Right cardiac atrium (tissue), 5 donors: ENCODE measurements at regions of chr4 and their contacts with region 1.

Region 1: GRCh38 chr4:55321707-55322264 is 24.3 kb upstream of the SRD5A3 start:
- DNase-seq: peak in 2 of 3 donors; percentile 80 to 84
- ATAC-seq: peak; percentile 29 to 67
- H3K4me3 ChIP-seq: no peak overlapping the region
- H3K27ac ChIP-seq: no peak overlapping the region
- H3K4me1 ChIP-seq: no peaks in the 10 kb centered on the region
- H3K27me3 ChIP-seq: no peaks in the 10 kb centered on the region

Region 2: DNA sequence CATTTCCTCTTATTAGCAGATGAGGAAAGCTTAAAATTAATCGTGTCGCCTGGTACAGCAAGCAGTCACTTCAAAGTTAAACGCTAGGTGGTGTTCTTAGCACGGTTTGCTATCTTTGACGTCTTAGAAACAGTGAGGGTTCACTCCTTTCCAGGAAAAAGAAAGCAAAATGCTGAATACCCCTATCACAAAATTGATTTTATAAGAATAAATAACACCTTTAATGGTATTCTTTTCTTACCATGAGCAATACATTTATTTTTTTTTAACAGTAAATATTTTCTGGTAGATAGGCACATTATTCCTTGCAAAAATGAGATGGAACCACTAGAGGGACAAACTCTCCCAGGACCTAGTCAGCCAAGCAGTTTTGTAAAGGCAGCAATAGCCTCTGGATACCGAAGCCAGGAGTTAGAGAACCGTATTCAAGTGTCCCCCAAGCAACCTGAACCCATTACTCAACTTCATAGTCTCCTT is 350.3 kb before region 1 on chr4:
- intact Hi-C with region 1: loop called in 3 of 4 experiments (anchors 2 to 5 kb)
- DNase-seq: no peak
- ATAC-seq: peak; percentile 71 to 83
- H3K4me3 ChIP-seq: no peak overlapping the region
- H3K27ac ChIP-seq: no peak overlapping the region
- H3K4me1 ChIP-seq: no peaks in the 10 kb centered on the region
- H3K27me3 ChIP-seq: no peaks in the 10 kb centered on the region

Region 3: DNA sequence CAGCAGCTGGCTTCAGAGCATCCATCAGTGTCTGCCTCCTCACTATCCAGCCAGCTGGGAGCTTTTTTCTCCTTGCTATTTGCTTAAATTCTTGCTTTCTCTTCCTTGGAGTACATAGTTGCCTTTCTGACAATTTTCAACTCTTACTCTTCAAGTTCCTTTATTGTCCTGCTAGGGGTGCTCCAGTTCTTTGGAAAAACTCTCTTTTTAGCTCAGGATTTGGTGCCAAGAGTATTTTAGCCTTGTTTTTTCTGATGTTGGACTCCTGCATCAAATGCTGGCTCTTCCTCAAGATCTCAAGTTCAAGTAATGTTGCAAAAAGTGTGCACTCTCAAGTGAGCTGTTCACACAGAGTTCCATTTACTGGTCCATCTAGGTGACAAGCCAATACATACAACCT is 322.8 kb before region 1 on chr4:
- intact Hi-C with region 1: loop called (anchors 2 to 10 kb)
- DNase-seq: no peak
- ATAC-seq: peak; percentile 71 to 77
- H3K4me3 ChIP-seq: no peak overlapping the region
- H3K27ac ChIP-seq: no peak overlapping the region
- H3K4me1 ChIP-seq: no peaks in the 10 kb centered on the region
- H3K27me3 ChIP-seq: no peaks in the 10 kb centered on the region

Region 4: GRCh38 chr4:55008166-55009070 is 313.4 kb before region 1 on chr4:
- intact Hi-C with region 1: loop called in 1 of 4 experiments (anchors 10 kb)
- DNase-seq: peak in 1 of 3 donors; percentile 12
- ATAC-seq: peak; percentile 41 to 71
- H3K4me3 ChIP-seq: no peak overlapping the region
- H3K27ac ChIP-seq: no peak overlapping the region
- H3K4me1 ChIP-seq: peaks cover 6% of the 10 kb centered on the region
- H3K27me3 ChIP-seq: no peaks in the 10 kb centered on the region

Region 5: DNA sequence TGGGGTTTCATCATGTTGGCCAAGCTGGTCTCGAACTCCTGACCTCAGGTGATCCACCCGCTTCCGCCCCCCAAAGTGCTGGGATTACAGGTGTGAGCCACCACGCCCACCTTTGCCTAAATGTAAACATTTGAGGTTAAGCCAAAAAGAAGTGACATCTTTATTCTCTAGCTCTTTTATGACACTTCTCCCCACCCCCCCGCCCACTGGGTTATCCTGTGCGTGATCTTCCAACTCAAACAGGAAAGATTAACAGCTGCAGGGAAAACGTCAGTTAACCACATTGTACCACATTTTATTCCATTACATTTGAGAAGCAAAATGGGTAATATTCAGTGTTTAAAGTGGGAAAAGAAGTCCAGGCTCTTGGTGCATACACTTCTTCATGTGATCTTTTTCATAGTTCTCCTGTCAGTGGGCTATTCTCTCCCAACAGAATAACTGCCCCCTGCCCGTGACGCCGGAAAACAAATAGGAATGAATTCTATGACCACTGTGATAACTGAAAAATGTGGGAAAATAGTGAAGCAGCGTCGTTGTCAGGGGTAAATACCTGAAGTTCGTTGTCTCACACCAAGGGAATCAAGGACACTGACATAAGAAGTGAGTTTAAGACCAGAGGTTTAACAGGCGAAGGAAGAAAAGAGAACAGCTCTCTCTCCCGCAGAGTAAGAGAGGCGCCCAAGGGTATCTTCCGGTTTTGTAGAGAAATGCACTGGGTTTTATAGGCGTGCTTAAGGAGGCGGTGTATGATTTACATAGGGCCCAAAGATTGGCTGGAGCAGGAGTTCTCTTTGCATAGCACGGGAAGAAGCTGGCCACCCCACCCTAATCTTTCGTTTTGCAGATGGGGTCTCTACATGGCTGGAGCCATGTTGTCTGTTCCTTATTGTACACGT is 14.6 kb after region 1 on chr4:
- intact Hi-C with region 1: no loop called
- DNase-seq: no peak
- ATAC-seq: no peak
- H3K4me3 ChIP-seq: no peak overlapping the region
- H3K27ac ChIP-seq: no peak overlapping the region
- H3K4me1 ChIP-seq: no peaks in the 10 kb centered on the region
- H3K27me3 ChIP-seq: no peaks in the 10 kb centered on the region